ENCODE measurements at regions of chr17 and their contacts with region 1.

Region 1: GRCh38 chr17:30477083-30477773 is at the start of gene GOSR1:
- DNase-seq: peak; percentile 71
- H3K4me3 ChIP-seq: peak within 1 kb of the TSS; percentile 86
- H3K27me3 ChIP-seq: no peaks in the 10 kb centered on the region
- CTCF ChIP-seq: peak; percentile 81
- polyA plus RNA-seq, gene GOSR1: 12.5 and 21.4 TPM in 2 replicates

Region 2: DNA sequence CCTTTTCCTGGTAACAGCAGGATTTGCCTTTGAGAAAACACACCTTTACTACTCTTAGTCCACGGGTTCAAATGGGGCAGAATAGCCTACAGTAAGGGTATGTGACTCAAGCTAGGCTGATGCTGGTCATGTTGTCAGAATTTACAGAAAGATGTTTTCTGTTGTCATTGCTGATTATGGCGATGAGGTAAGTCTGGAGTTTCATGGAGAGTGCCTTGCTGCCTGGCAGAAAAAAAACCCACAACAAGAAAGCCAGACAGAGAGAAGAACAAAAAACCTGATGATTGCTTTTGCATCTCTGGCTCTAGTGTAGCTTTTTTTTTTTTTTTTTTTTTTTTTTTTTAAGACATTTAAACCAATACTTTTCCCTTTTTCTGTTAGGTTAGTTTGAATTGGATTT is 289.7 kb before region 1 on chr17:
- CTCF ChIA-PET with region 1: no interaction called
- POLR2A ChIA-PET with region 1: no interaction called
- DNase-seq: no peak
- H3K4me3 ChIP-seq: no peak overlapping the region
- H3K27me3 ChIP-seq: no peaks in the 10 kb centered on the region
- CTCF ChIP-seq: no peak

Region 3: DNA sequence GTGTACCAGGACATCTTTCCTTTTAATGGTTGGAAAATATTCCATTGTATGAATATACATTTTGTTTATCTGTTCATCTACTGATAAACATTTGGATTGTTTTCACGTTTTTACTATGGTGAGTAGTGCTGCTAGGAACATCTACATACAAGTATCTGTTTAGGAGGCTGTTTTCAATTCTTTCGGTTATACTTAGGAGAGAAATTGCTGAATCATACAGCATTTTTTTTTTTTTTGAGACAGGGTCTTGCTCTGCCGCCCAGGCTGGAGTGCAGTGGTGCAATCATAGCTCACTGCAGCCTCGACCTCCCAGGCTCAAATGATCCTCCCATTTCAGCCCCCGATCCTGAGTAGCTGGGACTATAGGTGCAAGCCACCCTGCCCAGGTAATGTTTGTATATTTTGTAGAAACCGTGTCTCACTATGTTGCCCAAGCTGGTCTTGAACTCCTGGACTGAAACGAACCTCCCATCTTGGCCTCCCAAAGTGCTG is 224.3 kb after region 1 on chr17:
- CTCF ChIA-PET with region 1: interaction called, 11 read pairs
- POLR2A ChIA-PET with region 1: no interaction called
- DNase-seq: no peak
- H3K4me3 ChIP-seq: no peak overlapping the region
- H3K27me3 ChIP-seq: peaks cover 6% of the 10 kb centered on the region
- CTCF ChIP-seq: no peak

Region 4: GRCh38 chr17:30716461-30717300 is 239.5 kb after region 1 on chr17:
- CTCF ChIA-PET with region 1: interaction called, 10 read pairs
- POLR2A ChIA-PET with region 1: no interaction called
- DNase-seq: no peak
- H3K4me3 ChIP-seq: no peak overlapping the region
- H3K27me3 ChIP-seq: no peaks in the 10 kb centered on the region
- CTCF ChIP-seq: peak; percentile 26; the same call in 1 of the 2 replicates